H1 (cell line): ENCODE measurements at regions of chr12 and their contacts with region 1.

Region 1: GRCh38 chr12:110355073-110355472 is 48.4 kb downstream of the ANAPC7 start:
- DNase-seq: no peak
- H3K4me3 ChIP-seq: no peak overlapping the region
- H3K27ac ChIP-seq: no peak overlapping the region
- H3K4me1 ChIP-seq: no peaks in the 10 kb centered on the region
- H3K27me3 ChIP-seq: no peaks in the 10 kb centered on the region
- CTCF ChIP-seq: peak; percentile 38 to 71 (median 63)
- EP300 ChIP-seq: no peak
- POLR2A ChIP-seq: no peak
- RAD21 ChIP-seq: peak; percentile 42 to 48

Region 2: DNA sequence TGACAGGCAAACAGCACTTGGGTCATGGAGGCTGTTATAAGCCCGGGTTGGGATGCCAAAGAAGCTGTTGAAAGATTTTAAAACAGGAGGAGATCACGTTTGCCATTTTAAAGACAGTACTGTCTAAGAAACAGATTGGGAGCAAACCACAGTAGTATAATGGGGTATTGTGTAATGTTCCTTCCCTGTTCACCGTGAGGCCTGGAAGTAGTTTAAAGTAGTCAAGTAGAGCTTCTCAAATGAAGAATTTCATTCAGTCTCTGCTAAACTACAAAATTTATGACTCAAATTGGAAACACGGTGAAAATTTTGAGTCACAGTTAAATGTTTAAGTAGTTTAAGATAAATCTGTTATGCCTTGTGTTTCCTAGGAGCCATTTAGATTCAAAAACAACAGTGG is 38.2 kb before region 1 on chr12:
- CTCF ChIA-PET with region 1: interaction called, 10 read pairs
- POLR2A ChIA-PET with region 1: interaction called, 3 read pairs
- DNase-seq: no peak
- H3K4me3 ChIP-seq: no peak overlapping the region
- H3K27ac ChIP-seq: no peak overlapping the region
- H3K4me1 ChIP-seq: no peaks in the 10 kb centered on the region
- H3K27me3 ChIP-seq: no peaks in the 10 kb centered on the region
- CTCF ChIP-seq: no peak
- EP300 ChIP-seq: no peak
- POLR2A ChIP-seq: no peak
- RAD21 ChIP-seq: no peak